HepG2 (cell line): ENCODE measurements at regions of chr12 and their contacts with region 1.

Region 1: GRCh38 chr12:1760566-1761382 is 59.6 kb upstream of the LRTM2 start:
- DNase-seq: peak; percentile 95
- ATAC-seq: peak; percentile 99
- H3K4me3 ChIP-seq: peak overlapping the region in 1 of 3 experiments; percentile 7; a peak in 1 of 6 replicates
- H3K27ac ChIP-seq: peak overlapping the region; percentile 83
- H3K4me1 ChIP-seq: peaks cover 82% of the 10 kb centered on the region
- H3K27me3 ChIP-seq: no peaks in the 10 kb centered on the region
- CTCF ChIP-seq: no peak
- EP300 ChIP-seq: peak in 1 of 2 experiments; percentile 96; a peak in 2 of 4 replicates
- POLR2A ChIP-seq: no peak
- RAD21 ChIP-seq: no peak

Region 2: GRCh38 chr12:1661553-1662335 is 99.0 kb before region 1 on chr12:
- CTCF ChIA-PET with region 1: no interaction called
- POLR2A ChIA-PET with region 1: interaction called, 4 read pairs
- in situ Hi-C with region 1: no loop called
- intact Hi-C with region 1: loop called (anchors 10 kb)
- DNase-seq: peak; percentile 81
- ATAC-seq: peak; percentile 91
- H3K4me3 ChIP-seq: peak overlapping the region; percentile 50 to 73 (median 56); a peak in 4 of 6 replicates
- H3K27ac ChIP-seq: peak overlapping the region; percentile 69
- H3K4me1 ChIP-seq: peaks cover 54% of the 10 kb centered on the region
- H3K27me3 ChIP-seq: no peaks in the 10 kb centered on the region
- CTCF ChIP-seq: peak; percentile 21; the same call in 1 of the 2 replicates
- EP300 ChIP-seq: peak in 1 of 2 experiments; percentile 25; a peak in 2 of 4 replicates
- POLR2A ChIP-seq: peak; percentile 64 to 92
- RAD21 ChIP-seq: peak; percentile 43; the same call in 1 of the 2 replicates